Endothelial cell of umbilical vein (primary cell): ENCODE measurements at regions of chr11 and their contacts with region 1.

Region 1: GRCh38 chr11:86041975-86042378 is 26.9 kb downstream of the PICALM start:
- DNase-seq: peak; percentile 95
- H3K4me3 ChIP-seq: no peak overlapping the region
- H3K27ac ChIP-seq: peak overlapping the region; percentile 55
- H3K4me1 ChIP-seq: peaks cover 20% of the 10 kb centered on the region
- H3K27me3 ChIP-seq: no peaks in the 10 kb centered on the region
- CTCF ChIP-seq: peak; percentile 66
- POLR2A ChIP-seq: no peak

Region 2: DNA sequence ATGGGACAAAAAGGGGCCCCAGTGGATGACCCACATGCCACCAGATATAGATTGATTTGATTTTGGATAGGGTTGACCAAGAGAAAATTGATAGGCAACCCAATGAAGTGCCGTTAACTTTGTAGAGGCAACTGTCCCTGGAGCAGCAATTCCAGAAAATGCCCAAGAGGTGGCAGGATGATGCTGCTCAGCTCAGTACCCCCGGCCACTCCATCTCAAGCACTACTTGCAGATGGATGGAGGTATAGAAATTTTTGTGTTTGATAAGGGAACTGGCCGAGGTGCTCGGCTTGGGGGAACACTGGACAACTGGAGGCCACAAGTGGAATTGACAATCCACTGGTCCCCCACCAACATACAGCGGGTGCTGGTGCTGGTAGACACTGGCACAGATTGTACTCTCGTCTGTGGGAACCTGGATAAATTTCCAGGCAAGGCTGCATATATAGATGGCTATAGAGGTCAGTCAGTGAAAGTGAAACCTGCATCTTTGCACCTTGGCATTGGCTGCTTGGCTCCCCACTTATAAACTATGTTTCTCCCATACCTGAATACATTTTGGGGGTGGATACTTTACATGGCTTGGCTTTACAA is 100.5 kb before region 1 on chr11:
- CTCF ChIA-PET with region 1: no interaction called
- POLR2A ChIA-PET with region 1: interaction called, 4 read pairs
- dilution Hi-C with region 1: no loop called
- intact Hi-C with region 1: loop called (anchors 1 kb)
- DNase-seq: peak; percentile 71
- H3K4me3 ChIP-seq: no peak overlapping the region
- H3K27ac ChIP-seq: no peak overlapping the region
- H3K4me1 ChIP-seq: peaks cover 12% of the 10 kb centered on the region
- H3K27me3 ChIP-seq: no peaks in the 10 kb centered on the region
- CTCF ChIP-seq: peak; percentile 76
- POLR2A ChIP-seq: no peak

Region 3: DNA sequence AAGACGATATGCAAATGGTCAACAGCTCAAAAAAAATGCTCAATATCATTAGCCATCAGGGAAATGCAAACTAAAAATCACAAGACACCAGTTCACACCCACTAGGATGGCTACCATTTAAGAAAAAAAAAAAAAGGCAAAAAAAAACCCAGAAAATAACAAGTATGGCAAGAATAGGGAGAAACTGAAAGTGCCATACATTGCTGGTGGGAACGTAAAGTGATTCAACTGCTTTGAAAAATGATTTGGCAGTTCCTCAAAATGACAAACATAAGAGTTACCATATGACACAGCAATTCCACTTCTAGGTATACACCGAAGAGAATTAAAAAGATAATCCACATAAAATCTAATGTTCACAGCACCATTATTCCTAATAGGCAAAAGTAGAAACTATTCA is 20.6 kb before region 1 on chr11:
- CTCF ChIA-PET with region 1: interaction called, 23 read pairs
- POLR2A ChIA-PET with region 1: no interaction called
- dilution Hi-C with region 1: no loop called
- intact Hi-C with region 1: no loop called
- DNase-seq: no peak
- H3K4me3 ChIP-seq: no peak overlapping the region
- H3K27ac ChIP-seq: no peak overlapping the region
- H3K4me1 ChIP-seq: no peaks in the 10 kb centered on the region
- H3K27me3 ChIP-seq: no peaks in the 10 kb centered on the region
- CTCF ChIP-seq: no peak
- POLR2A ChIP-seq: no peak

Region 4: DNA sequence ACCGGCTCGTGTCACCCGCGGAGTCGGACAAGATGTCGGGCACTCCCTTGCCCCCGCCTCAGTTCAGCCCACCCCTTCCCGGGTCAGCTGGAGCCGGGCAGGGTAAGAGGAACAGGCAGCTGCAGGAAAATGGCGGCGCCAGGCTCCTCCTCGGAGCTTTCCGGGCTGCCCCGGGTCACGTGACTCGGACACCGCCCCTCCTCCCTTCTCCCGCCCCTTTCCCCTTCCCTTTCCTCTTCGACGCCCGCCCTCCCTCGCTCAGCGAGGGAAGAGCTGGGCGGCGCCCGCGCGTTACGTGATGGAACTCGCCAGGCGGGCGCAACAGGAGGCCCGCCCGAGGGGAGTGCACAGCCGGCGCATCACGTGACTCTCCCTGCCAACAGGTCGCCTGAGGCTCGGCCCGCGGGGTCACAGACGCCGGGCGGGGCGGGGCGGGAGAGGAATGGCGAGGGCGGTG is 27.0 kb after region 1 on chr11 and contains the start of gene PICALM:
- CTCF ChIA-PET with region 1: interaction called, 89 read pairs
- POLR2A ChIA-PET with region 1: no interaction called
- dilution Hi-C with region 1: no loop called
- intact Hi-C with region 1: loop called (anchors 1 kb)
- DNase-seq: peak; percentile 99
- H3K4me3 ChIP-seq: peak within 1 kb of the TSS; percentile 47 to 94 (median 89)
- H3K27ac ChIP-seq: peak within 1 kb of the TSS; percentile 100
- H3K4me1 ChIP-seq: peaks cover 27% of the 10 kb centered on the region
- H3K27me3 ChIP-seq: no peaks in the 10 kb centered on the region
- CTCF ChIP-seq: no peak
- POLR2A ChIP-seq: peak; percentile 82
- total RNA-seq, gene PICALM: 181 and 202 TPM in 2 replicates

Region 5: GRCh38 chr11:86193297-86194095 is 151.5 kb after region 1 on chr11:
- CTCF ChIA-PET with region 1: interaction called, 213 read pairs
- POLR2A ChIA-PET with region 1: no interaction called
- dilution Hi-C with region 1: no loop called
- intact Hi-C with region 1: loop called (anchors 1 kb)
- DNase-seq: peak; percentile 84
- H3K4me3 ChIP-seq: peak overlapping the region in 1 of 3 experiments; percentile 4
- H3K27ac ChIP-seq: peak overlapping the region; percentile 27
- H3K4me1 ChIP-seq: peaks cover 10% of the 10 kb centered on the region
- H3K27me3 ChIP-seq: no peaks in the 10 kb centered on the region
- CTCF ChIP-seq: peak; percentile 71 to 75
- POLR2A ChIP-seq: no peak

Region 6: GRCh38 chr11:86218125-86219084 is 176.4 kb after region 1 on chr11:
- CTCF ChIA-PET with region 1: interaction called, 70 read pairs
- POLR2A ChIA-PET with region 1: interaction called, 3 read pairs
- dilution Hi-C with region 1: loop called (anchors 25 kb)
- intact Hi-C with region 1: loop called (anchors 1 kb)
- DNase-seq: peak; percentile 82
- H3K4me3 ChIP-seq: peak overlapping the region in 1 of 3 experiments; percentile 3
- H3K27ac ChIP-seq: no peak overlapping the region
- H3K4me1 ChIP-seq: no peaks in the 10 kb centered on the region
- H3K27me3 ChIP-seq: peaks cover 1 to 12% of the 10 kb centered on the region in 2 experiments
- CTCF ChIP-seq: peak; percentile 86 to 91
- POLR2A ChIP-seq: no peak

Region 7: DNA sequence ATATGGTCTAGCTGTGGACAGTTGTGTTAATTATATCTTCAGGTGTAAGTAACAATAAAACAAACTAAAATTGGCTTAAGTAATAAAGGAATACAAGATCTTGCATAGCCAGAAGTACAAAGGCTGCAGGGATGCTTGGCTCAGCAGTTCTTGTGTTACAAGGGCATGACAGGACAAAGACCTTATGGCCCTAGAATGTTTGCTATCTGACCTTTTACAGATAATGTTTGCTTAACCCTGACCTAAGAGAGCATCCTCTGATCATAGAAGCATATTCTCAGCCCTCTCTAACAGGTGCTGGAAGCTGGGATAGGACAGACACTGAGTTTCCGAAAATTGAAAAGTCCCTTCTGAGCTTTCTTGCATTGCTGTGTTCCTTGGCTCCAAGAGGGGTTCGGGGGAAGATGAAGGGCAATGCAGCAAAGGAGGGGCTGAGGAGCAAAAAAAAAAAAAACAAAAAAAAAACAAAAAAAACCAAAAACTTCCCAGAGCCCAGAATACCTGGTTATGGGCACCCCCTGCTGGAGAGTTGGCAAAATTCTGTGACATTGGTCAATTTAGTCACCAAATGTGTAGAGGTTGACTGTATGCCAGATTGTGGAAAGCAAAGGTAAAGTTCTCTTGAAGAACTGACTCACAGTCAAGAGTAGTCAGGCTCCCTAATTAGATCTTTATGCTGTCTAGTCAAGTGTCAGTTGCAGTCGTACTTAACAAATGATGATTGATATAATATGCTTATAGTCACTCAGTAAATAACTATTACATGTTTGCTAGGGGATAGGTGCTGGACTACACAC is 249.7 kb after region 1 on chr11:
- CTCF ChIA-PET with region 1: interaction called, 10 read pairs
- POLR2A ChIA-PET with region 1: no interaction called
- dilution Hi-C with region 1: no loop called
- intact Hi-C with region 1: loop called (anchors 2 kb)
- DNase-seq: peak; percentile 49
- H3K4me3 ChIP-seq: no peak overlapping the region
- H3K27ac ChIP-seq: no peak overlapping the region
- H3K4me1 ChIP-seq: no peaks in the 10 kb centered on the region
- H3K27me3 ChIP-seq: peaks cover 0 to 3% of the 10 kb centered on the region in 2 experiments
- CTCF ChIP-seq: peak; percentile 59 to 68
- POLR2A ChIP-seq: no peak